ENCODE measurements at regions of chr17 and their contacts with region 1.

Region 1: GRCh38 chr17:29931231-29931932 is 1.4 kb upstream of the SSH2 start:
- DNase-seq: no peak
- H3K4me3 ChIP-seq: no peak overlapping the region
- H3K27me3 ChIP-seq: no peaks in the 10 kb centered on the region
- CTCF ChIP-seq: peak; percentile 93

Region 2: DNA sequence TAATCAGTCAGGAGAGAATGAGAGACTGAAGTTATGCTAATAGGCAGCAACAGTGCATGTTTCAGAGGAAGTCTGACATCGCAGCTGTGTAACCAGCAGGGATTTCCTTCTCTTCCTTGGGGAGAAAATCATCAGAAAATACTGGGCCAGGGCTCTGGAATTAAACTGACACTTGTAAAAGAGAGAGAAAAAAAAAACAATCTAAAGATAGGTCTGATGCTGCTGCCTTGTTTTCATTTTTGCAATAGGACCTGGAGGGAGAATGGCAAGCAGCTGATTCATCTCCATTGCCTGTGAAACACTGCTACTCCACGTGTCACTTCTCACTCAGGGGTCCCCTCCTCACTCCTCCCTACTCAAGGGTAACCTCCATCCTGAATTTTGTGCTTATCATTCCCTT is 291.0 kb before region 1 on chr17:
- CTCF ChIA-PET with region 1: interaction called, 49 read pairs
- POLR2A ChIA-PET with region 1: no interaction called
- DNase-seq: peak; percentile 52
- H3K4me3 ChIP-seq: no peak overlapping the region
- H3K27me3 ChIP-seq: no peaks in the 10 kb centered on the region
- CTCF ChIP-seq: no peak

Region 3: GRCh38 chr17:29840884-29841283 is 90.5 kb before region 1 on chr17:
- CTCF ChIA-PET with region 1: interaction called, 18 read pairs
- POLR2A ChIA-PET with region 1: no interaction called
- DNase-seq: no peak
- H3K4me3 ChIP-seq: no peak overlapping the region
- H3K27me3 ChIP-seq: no peaks in the 10 kb centered on the region
- CTCF ChIP-seq: no peak

Region 4: GRCh38 chr17:29867643-29868181 is 63.7 kb before region 1 on chr17:
- CTCF ChIA-PET with region 1: interaction called, 23 read pairs
- POLR2A ChIA-PET with region 1: no interaction called
- DNase-seq: no peak
- H3K4me3 ChIP-seq: no peak overlapping the region
- H3K27me3 ChIP-seq: no peaks in the 10 kb centered on the region
- CTCF ChIP-seq: peak; percentile 23; the same call in 1 of the 2 replicates

Region 5: DNA sequence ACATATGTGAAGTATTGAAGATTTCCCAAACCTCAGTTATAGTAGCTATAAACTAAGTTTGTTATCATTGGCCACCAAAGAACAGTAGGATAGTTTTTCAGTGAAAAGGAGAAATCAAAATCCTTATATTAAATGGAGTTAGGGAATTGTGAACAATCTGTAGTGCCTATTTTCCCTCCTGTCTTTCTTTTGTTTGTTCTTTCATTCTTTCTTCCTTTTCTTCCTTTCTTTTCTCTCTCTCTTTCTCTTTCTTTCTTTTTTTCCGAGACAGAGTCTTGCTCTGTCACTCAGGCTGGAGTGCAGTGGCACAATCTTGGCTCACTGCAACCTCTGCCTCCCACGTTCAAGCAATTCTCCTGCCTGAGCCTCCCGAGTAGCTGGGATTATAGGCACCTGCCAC is 50.1 kb before region 1 on chr17:
- CTCF ChIA-PET with region 1: no interaction called
- POLR2A ChIA-PET with region 1: no interaction called
- DNase-seq: no peak
- H3K4me3 ChIP-seq: no peak overlapping the region
- H3K27me3 ChIP-seq: no peaks in the 10 kb centered on the region
- CTCF ChIP-seq: no peak

Region 6: DNA sequence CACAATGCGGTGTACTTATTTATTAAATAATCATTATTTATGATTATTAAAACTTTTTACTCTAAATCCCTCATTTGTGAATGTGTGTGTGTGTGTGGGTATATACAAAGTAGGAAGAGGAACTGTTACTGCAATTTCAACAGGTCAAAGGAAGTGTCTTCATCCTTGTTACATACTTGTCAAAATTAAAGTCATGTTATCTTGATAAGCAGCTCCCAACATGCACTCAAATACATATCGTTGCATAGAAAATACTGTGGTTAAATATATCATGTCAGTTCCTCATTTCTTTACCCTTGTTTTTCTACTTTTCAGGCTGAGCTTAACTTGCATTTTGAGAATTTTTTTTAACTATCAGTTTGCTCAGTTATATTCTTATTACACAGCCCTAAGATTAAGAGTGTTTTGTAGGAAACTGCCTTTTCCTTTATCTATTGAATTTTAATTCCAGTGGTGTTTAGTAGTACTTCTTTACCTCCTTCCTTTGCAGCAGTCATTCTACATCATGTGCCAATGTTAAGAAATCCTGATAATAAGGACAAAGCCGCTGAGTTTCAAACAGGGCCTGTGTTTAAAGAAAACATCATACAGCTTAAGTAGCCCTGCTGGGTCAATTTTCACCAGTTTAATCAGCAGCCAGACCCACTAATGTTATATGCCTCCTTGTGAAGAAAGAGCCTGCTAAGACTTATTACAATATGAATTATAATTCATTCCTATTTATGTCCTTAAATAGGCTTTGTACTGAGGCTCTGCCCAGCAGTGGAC is 17.2 kb after region 1 on chr17:
- CTCF ChIA-PET with region 1: interaction called, 18 read pairs
- POLR2A ChIA-PET with region 1: no interaction called
- DNase-seq: no peak
- H3K4me3 ChIP-seq: no peak overlapping the region
- H3K27me3 ChIP-seq: no peaks in the 10 kb centered on the region
- CTCF ChIP-seq: no peak

Region 7: DNA sequence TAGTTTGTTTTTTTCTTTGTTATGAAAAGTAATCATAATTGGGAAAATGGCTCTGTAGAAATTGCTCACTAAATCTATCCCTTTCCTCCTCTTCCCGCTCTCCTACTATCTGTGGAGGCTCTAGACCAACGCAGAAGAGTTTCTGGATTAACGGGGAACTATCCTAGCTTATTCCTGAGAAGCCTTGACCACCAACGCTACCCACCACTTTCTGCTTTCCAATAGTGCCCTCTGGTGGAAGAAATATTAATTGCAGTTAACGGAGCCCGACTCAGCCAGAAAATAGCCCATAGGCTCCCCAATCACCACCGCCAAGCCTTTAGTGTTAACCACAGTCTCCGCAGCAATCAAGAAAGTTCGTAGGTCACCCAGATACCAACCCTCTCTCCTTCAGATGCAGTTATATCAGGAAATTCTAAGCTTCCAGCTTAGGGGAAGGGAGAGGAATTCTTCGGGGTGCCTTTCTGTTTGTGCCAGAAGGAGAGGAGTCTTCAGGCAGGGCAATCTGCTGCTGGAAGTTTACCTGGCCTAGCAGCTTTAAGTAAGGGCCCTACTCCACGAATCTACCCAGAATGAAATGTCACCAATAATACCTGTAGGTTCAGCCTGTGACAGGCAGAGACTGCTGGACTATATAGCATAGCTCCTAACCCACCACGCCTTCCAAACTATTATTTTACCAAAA is 162.2 kb after region 1 on chr17:
- CTCF ChIA-PET with region 1: interaction called, 44 read pairs
- POLR2A ChIA-PET with region 1: no interaction called
- DNase-seq: no peak
- H3K4me3 ChIP-seq: no peak overlapping the region
- H3K27me3 ChIP-seq: no peaks in the 10 kb centered on the region
- CTCF ChIP-seq: peak; percentile 68